A673 (cell line): ENCODE measurements at regions of chr2 and their contacts with region 1.

Region 1: GRCh38 chr2:22215517-22215916 is 1091.7 kb downstream of the TDRD15 start:
- DNase-seq: peak; percentile 20
- H3K4me3 ChIP-seq: no peak overlapping the region
- H3K27ac ChIP-seq: no peak overlapping the region
- H3K4me1 ChIP-seq: no peaks in the 10 kb centered on the region
- H3K27me3 ChIP-seq: peaks cover 37% of the 10 kb centered on the region
- CTCF ChIP-seq: peak; percentile 43; the same call in 1 of the 2 replicates

Region 2: GRCh38 chr2:21924640-21925285 is 290.8 kb before region 1 on chr2:
- CTCF ChIA-PET with region 1: no interaction called
- POLR2A ChIA-PET with region 1: no interaction called
- intact Hi-C with region 1: loop called (anchors 5 kb)
- DNase-seq: no peak
- H3K4me3 ChIP-seq: no peak overlapping the region
- H3K27ac ChIP-seq: no peak overlapping the region
- H3K4me1 ChIP-seq: no peaks in the 10 kb centered on the region
- H3K27me3 ChIP-seq: no peaks in the 10 kb centered on the region
- CTCF ChIP-seq: no peak

Region 3: GRCh38 chr2:22110244-22110651 is 105.3 kb before region 1 on chr2:
- CTCF ChIA-PET with region 1: no interaction called
- POLR2A ChIA-PET with region 1: no interaction called
- intact Hi-C with region 1: no loop called
- DNase-seq: peak; percentile 21
- H3K4me3 ChIP-seq: no peak overlapping the region
- H3K27ac ChIP-seq: no peak overlapping the region
- H3K4me1 ChIP-seq: no peaks in the 10 kb centered on the region
- H3K27me3 ChIP-seq: no peaks in the 10 kb centered on the region
- CTCF ChIP-seq: 0 out of 2 replicates have a peak, but pooled peaks have one; percentile 18